Heart left ventricle (tissue), 16 donors: ENCODE measurements at regions of chr1 and their contacts with region 1.

Region 1: GRCh38 chr1:33367485-33368405 is 46.8 kb upstream of the A3GALT2 start:
- DNase-seq: peak; percentile 88 to 93 (median 88)
- ATAC-seq: peak; percentile 45 to 76 (median 68)
- H3K4me3 ChIP-seq: no peak overlapping the region
- H3K27ac ChIP-seq: peak overlapping the region in 11 of 12 donors; percentile 66 to 92 (median 81)
- H3K4me1 ChIP-seq: peaks cover 17 to 70% (median 54%) of the 10 kb centered on the region in 12 donors
- H3K27me3 ChIP-seq: no peaks in the 10 kb centered on the region
- CTCF ChIP-seq: peak; percentile 94 to 99 (median 96)
- POLR2A ChIP-seq: no peak

Region 2: DNA sequence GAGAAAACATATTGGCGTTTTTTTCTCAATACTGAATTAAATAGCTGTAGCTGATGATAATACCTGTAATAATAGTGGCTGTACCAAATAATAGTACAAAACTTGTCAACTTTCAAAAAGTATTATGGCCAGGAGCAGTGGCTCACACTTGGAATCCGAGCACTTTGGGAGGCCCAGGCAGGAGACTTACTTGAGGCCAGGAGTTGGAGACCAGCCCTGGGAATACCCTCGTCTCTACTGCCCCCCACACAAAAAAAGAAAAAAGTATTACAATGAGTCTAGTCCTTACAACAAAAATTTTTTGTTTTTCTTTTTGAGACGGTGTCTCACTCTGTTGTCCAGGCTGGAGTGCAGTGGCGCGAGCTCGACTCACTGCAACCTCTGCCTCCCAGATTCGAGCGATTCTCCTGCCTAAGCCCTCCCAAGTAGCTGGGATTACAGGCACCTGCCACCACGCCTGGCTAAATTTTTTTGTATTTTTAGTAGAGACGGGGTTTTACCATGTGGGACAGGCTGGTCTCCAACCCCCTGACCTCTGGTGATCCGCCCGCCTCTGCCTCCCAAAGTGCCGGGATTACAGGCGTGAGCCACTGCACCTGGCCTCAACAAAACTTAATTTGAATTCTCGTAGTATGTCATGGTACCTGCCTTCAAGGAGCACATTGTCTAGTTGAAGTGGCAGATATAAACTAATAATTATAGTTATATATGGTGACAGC is 715.3 kb before region 1 on chr1:
- intact Hi-C with region 1: no loop called
- DNase-seq: no peak
- ATAC-seq: no peak
- H3K4me3 ChIP-seq: peak overlapping the region in 10 of 12 donors; percentile 55 to 95 (median 72)
- H3K27ac ChIP-seq: peak overlapping the region in 3 of 12 donors; percentile 97 to 99 (median 98)
- H3K4me1 ChIP-seq: peaks cover 2 to 59% (median 27%) of the 10 kb centered on the region in 12 donors
- H3K27me3 ChIP-seq: no peaks in the 10 kb centered on the region
- CTCF ChIP-seq: no peak
- POLR2A ChIP-seq: no peak

Region 3: DNA sequence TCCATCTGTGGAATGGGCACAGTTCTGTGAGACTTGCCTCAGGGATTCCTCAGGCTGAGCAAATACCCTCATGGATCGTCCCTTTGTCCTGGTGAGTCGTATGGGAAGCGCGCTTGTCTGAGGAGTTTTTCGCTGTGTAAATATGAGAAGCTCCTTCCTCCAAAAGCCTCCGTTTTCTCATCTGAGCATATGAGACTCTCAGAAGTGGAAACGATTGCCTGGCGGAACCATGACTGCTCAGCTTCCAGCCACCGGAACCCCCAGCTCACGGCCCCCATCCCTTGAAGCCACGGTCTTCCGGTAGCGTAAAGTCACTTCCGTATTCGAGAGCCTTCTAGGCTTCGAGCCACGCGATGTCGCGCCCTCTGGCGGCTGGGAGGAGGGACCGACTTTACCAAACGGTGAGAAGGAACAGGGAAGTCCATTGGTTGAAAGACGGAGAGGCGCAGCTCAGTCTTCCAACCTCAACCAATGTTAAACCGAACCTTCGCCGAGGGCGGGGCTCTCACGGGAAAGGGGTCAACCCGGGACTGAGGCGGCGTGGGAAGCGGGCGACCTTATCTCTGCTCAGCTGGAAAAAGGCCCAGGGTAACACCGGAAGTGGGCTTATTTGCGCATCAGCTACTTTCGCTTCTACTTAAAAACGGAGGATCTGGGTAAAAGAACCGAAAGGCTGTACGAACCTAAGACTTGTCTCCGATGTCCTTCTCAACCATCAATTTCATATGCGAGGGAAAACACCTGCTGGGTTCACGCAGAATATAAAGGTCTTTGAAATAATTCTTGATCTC is 240.5 kb before region 1 on chr1:
- intact Hi-C with region 1: loop called in 6 of 10 experiments (anchors 5 to 10 kb)
- DNase-seq: peak; percentile 98 to 99 (median 99)
- ATAC-seq: peak; percentile 98 to 99 (median 98)
- H3K4me3 ChIP-seq: peak overlapping the region; percentile 30 to 93 (median 76)
- H3K27ac ChIP-seq: peak overlapping the region; percentile 72 to 92 (median 84)
- H3K4me1 ChIP-seq: peaks cover 2 to 28% (median 18%) of the 10 kb centered on the region in 12 donors
- H3K27me3 ChIP-seq: no peaks in the 10 kb centered on the region
- CTCF ChIP-seq: peak; percentile 83 to 99 (median 93)
- POLR2A ChIP-seq: peak in 1 of 2 donors; percentile 64

Region 4: DNA sequence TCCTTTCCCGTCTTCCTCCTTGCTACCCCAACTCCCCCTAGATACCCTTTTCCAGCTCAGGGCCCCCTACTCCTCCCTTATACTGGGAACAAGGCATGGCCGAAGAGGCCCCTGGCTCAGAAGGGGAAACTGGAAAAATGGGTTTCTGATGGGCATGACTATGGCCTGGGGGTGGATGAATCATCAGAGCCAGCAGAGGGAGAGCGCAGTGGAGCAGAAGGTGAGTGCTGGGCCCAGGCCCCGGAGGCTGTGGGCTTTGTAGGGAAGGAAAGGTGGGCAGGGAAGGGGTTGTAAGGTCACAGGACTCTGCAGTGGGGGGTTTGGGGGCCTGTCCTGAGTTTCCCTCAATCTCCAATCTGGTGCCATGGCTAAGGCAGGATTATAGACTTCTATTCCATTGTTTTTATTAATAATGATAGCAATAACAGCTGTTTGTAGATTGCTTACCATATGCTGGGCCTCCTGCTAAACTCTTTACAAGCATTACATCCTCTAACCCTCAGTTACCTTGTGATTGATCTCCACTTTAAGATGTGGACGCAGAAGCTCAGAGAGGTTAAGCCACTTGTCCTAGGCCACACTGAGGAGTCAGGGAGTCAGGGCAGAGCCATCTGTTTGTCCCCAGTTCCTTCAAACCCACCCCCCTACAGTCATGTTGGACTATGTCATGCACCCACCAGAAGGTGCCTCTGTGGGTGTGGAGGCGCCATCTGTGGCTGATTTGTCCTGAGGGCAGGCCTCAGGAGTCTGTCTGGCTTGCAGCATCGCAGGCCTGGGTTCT is 147.7 kb before region 1 on chr1:
- intact Hi-C with region 1: loop called in 8 of 10 experiments (anchors 1 to 10 kb)
- DNase-seq: no peak
- ATAC-seq: peak in 2 of 4 donors; percentile 16 to 44
- H3K4me3 ChIP-seq: no peak overlapping the region
- H3K27ac ChIP-seq: peak overlapping the region in 1 of 12 donors; percentile 16
- H3K4me1 ChIP-seq: peaks cover 0 to 26% (median 0%) of the 10 kb centered on the region in 12 donors
- H3K27me3 ChIP-seq: no peaks in the 10 kb centered on the region
- CTCF ChIP-seq: no peak
- POLR2A ChIP-seq: no peak

Region 5: DNA sequence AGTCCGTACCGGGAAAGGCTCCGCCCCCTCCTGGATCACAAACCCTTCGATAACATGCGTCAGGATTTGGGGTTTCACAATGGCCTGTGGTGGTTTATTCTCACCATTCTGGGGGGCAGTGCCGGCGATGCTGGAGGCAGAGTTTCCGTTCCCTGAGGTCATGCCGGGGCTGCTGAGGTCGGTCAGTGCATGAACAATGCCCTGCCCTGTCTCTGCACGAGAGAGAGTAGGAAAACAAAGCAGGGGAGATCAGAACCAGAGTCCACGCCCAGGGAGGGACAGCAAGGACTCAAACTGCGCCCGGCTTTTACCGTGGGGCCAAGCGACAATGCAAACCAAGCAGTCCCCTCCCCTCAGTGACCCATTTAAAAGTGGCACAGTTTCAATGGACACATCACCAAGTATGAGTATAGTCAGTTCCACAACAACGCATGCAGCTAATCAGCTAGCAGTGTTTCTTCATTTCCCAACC is 33.6 kb before region 1 on chr1:
- intact Hi-C with region 1: loop called in 3 of 10 experiments (anchors 2 to 5 kb)
- DNase-seq: peak in 4 of 5 donors; percentile 44 to 80 (median 61)
- ATAC-seq: peak; percentile 35 to 74 (median 64)
- H3K4me3 ChIP-seq: peak overlapping the region in 4 of 12 donors; percentile 0 to 25 (median 4)
- H3K27ac ChIP-seq: peak overlapping the region; percentile 29 to 98 (median 76)
- H3K4me1 ChIP-seq: peaks cover 33 to 96% (median 81%) of the 10 kb centered on the region in 12 donors
- H3K27me3 ChIP-seq: no peaks in the 10 kb centered on the region
- CTCF ChIP-seq: no peak
- POLR2A ChIP-seq: no peak

Region 6: GRCh38 chr1:33460947-33461629 is 93.3 kb after region 1 on chr1:
- intact Hi-C with region 1: loop called in 8 of 10 experiments (anchors 5 kb)
- DNase-seq: peak in 4 of 5 donors; percentile 63 to 80 (median 74)
- ATAC-seq: peak; percentile 75 to 81 (median 78)
- H3K4me3 ChIP-seq: peak overlapping the region in 2 of 12 donors; percentile 23 to 25
- H3K27ac ChIP-seq: peak overlapping the region; percentile 68 to 95 (median 86)
- H3K4me1 ChIP-seq: peaks cover 0 to 68% (median 33%) of the 10 kb centered on the region in 12 donors
- H3K27me3 ChIP-seq: no peaks in the 10 kb centered on the region
- CTCF ChIP-seq: no peak
- POLR2A ChIP-seq: no peak

Region 7: GRCh38 chr1:33606272-33606671 is 238.5 kb after region 1 on chr1:
- intact Hi-C with region 1: loop called in 6 of 10 experiments (anchors 5 to 10 kb)
- DNase-seq: peak in 4 of 5 donors; percentile 62 to 77 (median 73)
- ATAC-seq: peak; percentile 70 to 88 (median 76)
- H3K4me3 ChIP-seq: no peak overlapping the region
- H3K27ac ChIP-seq: peak overlapping the region in 9 of 12 donors; percentile 34 to 88 (median 76)
- H3K4me1 ChIP-seq: peaks cover 0 to 35% (median 8%) of the 10 kb centered on the region in 12 donors
- H3K27me3 ChIP-seq: no peaks in the 10 kb centered on the region
- CTCF ChIP-seq: no peak
- POLR2A ChIP-seq: no peak